Mammary epithelial cell (primary cell): ENCODE measurements at regions of chr2 and their contacts with region 1.

Region 1: GRCh38 chr2:147082850-147083522 is 761.8 kb upstream of the ACVR2A start:
- DNase-seq: peak; percentile 58
- H3K4me3 ChIP-seq: no peak overlapping the region
- H3K27ac ChIP-seq: no peak overlapping the region
- H3K4me1 ChIP-seq: no peaks in the 10 kb centered on the region
- H3K27me3 ChIP-seq: no peaks in the 10 kb centered on the region
- CTCF ChIP-seq: peak; percentile 90 to 98

Region 2: DNA sequence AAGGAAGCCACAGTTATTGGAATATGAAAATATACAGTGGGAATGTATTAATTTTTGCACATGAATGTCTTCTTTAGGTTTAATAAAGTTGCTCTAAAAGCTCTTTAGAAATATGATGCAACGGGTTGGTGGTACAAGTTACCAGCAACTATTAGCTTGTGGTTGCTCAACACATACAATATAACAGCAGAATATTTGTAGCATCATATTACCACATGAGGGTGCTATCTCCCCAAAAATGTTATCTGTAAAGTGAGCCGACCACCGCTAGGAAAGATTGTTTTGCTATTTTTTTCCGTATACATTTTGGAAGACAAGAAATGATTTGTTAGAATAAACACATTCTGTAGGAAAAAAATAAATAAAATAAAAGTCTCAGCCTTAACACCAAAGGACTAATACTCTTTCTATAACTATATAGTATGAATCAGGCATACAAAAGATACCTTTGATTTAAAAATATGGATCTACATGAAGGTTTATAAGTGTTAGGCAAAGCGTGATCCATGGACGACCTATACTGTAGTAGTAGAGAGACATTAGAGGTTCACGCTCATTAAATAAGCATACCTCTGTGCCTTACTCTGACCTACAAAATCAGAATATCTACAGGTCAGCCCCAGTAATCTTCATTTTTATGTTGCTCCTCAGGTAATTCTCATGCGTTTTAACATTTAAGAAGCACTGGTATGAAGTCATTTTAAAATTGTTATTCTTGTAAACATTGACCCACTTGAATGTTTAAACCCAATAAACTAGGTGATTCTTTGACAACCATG is 348.8 kb before region 1 on chr2:
- CTCF ChIA-PET with region 1: interaction called, 8 read pairs
- dilution Hi-C with region 1: no loop called
- in situ Hi-C with region 1: no loop called
- intact Hi-C with region 1: loop called (anchors 10 kb)
- DNase-seq: peak; percentile 39
- H3K4me3 ChIP-seq: no peak overlapping the region
- H3K27ac ChIP-seq: no peak overlapping the region
- H3K4me1 ChIP-seq: no peaks in the 10 kb centered on the region
- H3K27me3 ChIP-seq: no peaks in the 10 kb centered on the region
- CTCF ChIP-seq: peak; percentile 56 to 62

Region 3: DNA sequence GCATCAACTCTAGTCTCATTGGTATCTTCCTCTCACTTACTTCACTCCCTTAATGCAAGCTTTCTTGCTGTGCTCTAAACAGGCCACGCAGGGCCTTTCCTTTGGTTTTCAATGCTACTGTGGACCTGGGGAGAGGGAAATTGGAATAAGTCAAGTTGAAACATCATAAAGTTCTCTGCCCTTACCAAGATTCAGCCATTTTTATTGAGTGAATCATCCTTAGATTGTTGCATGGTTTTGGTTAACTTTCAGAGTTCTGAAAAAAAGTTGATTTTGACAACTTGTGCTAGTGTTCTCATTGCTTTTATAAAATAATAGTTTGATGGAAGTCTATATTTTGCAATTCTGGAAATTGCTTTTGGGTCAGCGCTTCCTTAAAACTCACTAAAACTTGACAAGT is 90.9 kb before region 1 on chr2:
- CTCF ChIA-PET with region 1: interaction called, 12 read pairs
- dilution Hi-C with region 1: no loop called
- in situ Hi-C with region 1: no loop called
- intact Hi-C with region 1: no loop called
- DNase-seq: no peak
- H3K4me3 ChIP-seq: no peak overlapping the region
- H3K27ac ChIP-seq: no peak overlapping the region
- H3K4me1 ChIP-seq: peaks cover 41% of the 10 kb centered on the region
- H3K27me3 ChIP-seq: no peaks in the 10 kb centered on the region
- CTCF ChIP-seq: no peak

Region 4: DNA sequence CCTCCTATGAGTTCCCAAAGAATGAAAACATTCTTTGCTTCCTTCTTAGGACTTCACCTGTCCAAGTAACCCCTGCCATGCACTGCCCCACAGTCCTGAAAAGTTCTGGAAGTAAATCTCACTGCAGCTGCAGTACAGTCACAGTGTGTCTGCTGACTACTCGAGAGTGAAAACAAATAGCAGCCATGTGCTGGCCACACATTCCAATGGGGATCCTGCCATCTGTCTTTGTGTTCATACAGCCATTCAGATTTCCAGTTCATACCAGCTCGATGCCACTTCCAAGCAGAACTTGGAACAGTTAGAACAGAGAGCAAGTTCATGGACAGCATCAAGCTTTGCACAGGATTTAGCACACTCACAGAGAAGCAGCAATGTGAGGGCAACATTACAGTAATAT is 131.9 kb after region 1 on chr2:
- CTCF ChIA-PET with region 1: no interaction called
- dilution Hi-C with region 1: no loop called
- in situ Hi-C with region 1: no loop called
- intact Hi-C with region 1: loop called (anchors 10 kb)
- DNase-seq: no peak
- H3K4me3 ChIP-seq: no peak overlapping the region
- H3K27ac ChIP-seq: no peak overlapping the region
- H3K4me1 ChIP-seq: no peaks in the 10 kb centered on the region
- H3K27me3 ChIP-seq: no peaks in the 10 kb centered on the region
- CTCF ChIP-seq: no peak

Region 5: GRCh38 chr2:147275943-147276342 is 193.0 kb after region 1 on chr2:
- CTCF ChIA-PET with region 1: no interaction called
- dilution Hi-C with region 1: no loop called
- in situ Hi-C with region 1: no loop called
- intact Hi-C with region 1: loop called (anchors 10 kb)
- DNase-seq: no peak
- H3K4me3 ChIP-seq: no peak overlapping the region
- H3K27ac ChIP-seq: no peak overlapping the region
- H3K4me1 ChIP-seq: peaks cover 19% of the 10 kb centered on the region
- H3K27me3 ChIP-seq: no peaks in the 10 kb centered on the region
- CTCF ChIP-seq: peak; percentile 26 to 29

Region 6: GRCh38 chr2:147331790-147332419 is 248.9 kb after region 1 on chr2:
- CTCF ChIA-PET with region 1: no interaction called
- dilution Hi-C with region 1: no loop called
- in situ Hi-C with region 1: loop called in 1 of 2 experiments (anchors 25 kb)
- intact Hi-C with region 1: loop called (anchors 1 kb)
- DNase-seq: peak; percentile 42
- H3K4me3 ChIP-seq: no peak overlapping the region
- H3K27ac ChIP-seq: no peak overlapping the region
- H3K4me1 ChIP-seq: no peaks in the 10 kb centered on the region
- H3K27me3 ChIP-seq: no peaks in the 10 kb centered on the region
- CTCF ChIP-seq: peak; percentile 61 to 73

Region 7: GRCh38 chr2:147843864-147844696 is 761.1 kb after region 1 on chr2:
- CTCF ChIA-PET with region 1: no interaction called
- dilution Hi-C with region 1: no loop called
- in situ Hi-C with region 1: no loop called
- intact Hi-C with region 1: loop called (anchors 5 kb)
- DNase-seq: peak; percentile 87
- H3K4me3 ChIP-seq: peak overlapping the region; percentile 72 to 90 (median 88)
- H3K27ac ChIP-seq: peak overlapping the region; percentile 86
- H3K4me1 ChIP-seq: no peaks in the 10 kb centered on the region
- H3K27me3 ChIP-seq: no peaks in the 10 kb centered on the region
- CTCF ChIP-seq: peak in 1 of 2 donors; percentile 42